Natural killer cell (primary cell): ENCODE measurements at regions of chr4 and their contacts with region 1.

Region 1: GRCh38 chr4:47668810-47669408 is 169.0 kb downstream of the CORIN start:
- DNase-seq: peak in 1 of 2 donors; percentile 70
- ATAC-seq: peak in 2 of 3 donors; percentile 60 to 68
- H3K4me3 ChIP-seq: no peak overlapping the region
- H3K4me3 Mint-ChIP-seq: no peak overlapping the region
- H3K27ac ChIP-seq: no peak overlapping the region
- H3K27ac Mint-ChIP-seq: no peak overlapping the region
- H3K4me1 ChIP-seq: no peaks in the 10 kb centered on the region
- H3K4me1 Mint-ChIP-seq: no peaks in the 10 kb centered on the region
- H3K27me3 ChIP-seq: no peaks in the 10 kb centered on the region
- H3K27me3 Mint-ChIP-seq: peaks cover 16 to 58% of the 10 kb centered on the region in 2 donors
- CTCF ChIP-seq: peak; percentile 68

Region 2: GRCh38 chr4:46219872-46220271 is 1449.0 kb before region 1 on chr4:
- intact Hi-C with region 1: no loop called
- DNase-seq: no peak
- ATAC-seq: no peak
- H3K4me3 ChIP-seq: no peak overlapping the region
- H3K4me3 Mint-ChIP-seq: no peak overlapping the region
- H3K27ac ChIP-seq: no peak overlapping the region
- H3K27ac Mint-ChIP-seq: no peak overlapping the region
- H3K4me1 ChIP-seq: no peaks in the 10 kb centered on the region
- H3K4me1 Mint-ChIP-seq: no peaks in the 10 kb centered on the region
- H3K27me3 ChIP-seq: no peaks in the 10 kb centered on the region
- H3K27me3 Mint-ChIP-seq: no peaks in the 10 kb centered on the region
- CTCF ChIP-seq: no peak

Region 3: DNA sequence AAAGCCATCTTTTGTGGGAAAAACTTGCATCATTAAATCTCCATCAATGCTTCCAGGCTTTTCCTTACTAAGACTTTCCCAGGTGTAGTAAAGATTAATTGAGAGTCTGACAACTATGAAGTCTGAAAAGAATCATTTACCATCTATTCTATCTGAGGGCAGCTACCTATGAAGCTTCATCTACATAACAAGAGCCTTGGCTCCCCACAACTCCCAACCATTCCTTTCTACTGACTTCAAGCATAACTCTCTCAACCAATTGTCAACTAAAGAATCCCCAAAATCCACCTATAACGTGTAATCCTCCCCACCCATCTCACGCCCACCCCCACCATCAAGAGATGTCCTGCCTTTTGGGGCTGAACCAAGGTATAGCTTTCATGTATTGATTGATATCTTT is 1177.5 kb before region 1 on chr4:
- intact Hi-C with region 1: no loop called
- DNase-seq: no peak
- ATAC-seq: no peak
- H3K4me3 ChIP-seq: no peak overlapping the region
- H3K4me3 Mint-ChIP-seq: no peak overlapping the region
- H3K27ac ChIP-seq: no peak overlapping the region
- H3K27ac Mint-ChIP-seq: no peak overlapping the region
- H3K4me1 ChIP-seq: no peaks in the 10 kb centered on the region
- H3K4me1 Mint-ChIP-seq: no peaks in the 10 kb centered on the region
- H3K27me3 ChIP-seq: no peaks in the 10 kb centered on the region
- H3K27me3 Mint-ChIP-seq: no peaks in the 10 kb centered on the region
- CTCF ChIP-seq: no peak

Region 4: GRCh38 chr4:46676364-46676763 is 992.5 kb before region 1 on chr4:
- intact Hi-C with region 1: no loop called
- DNase-seq: no peak
- ATAC-seq: no peak
- H3K4me3 ChIP-seq: no peak overlapping the region
- H3K4me3 Mint-ChIP-seq: no peak overlapping the region
- H3K27ac ChIP-seq: no peak overlapping the region
- H3K27ac Mint-ChIP-seq: no peak overlapping the region
- H3K4me1 ChIP-seq: no peaks in the 10 kb centered on the region
- H3K4me1 Mint-ChIP-seq: no peaks in the 10 kb centered on the region
- H3K27me3 ChIP-seq: no peaks in the 10 kb centered on the region
- H3K27me3 Mint-ChIP-seq: no peaks in the 10 kb centered on the region
- CTCF ChIP-seq: no peak

Region 5: GRCh38 chr4:47368211-47368610 is 300.7 kb before region 1 on chr4:
- intact Hi-C with region 1: no loop called
- DNase-seq: no peak
- ATAC-seq: no peak
- H3K4me3 ChIP-seq: no peak overlapping the region
- H3K4me3 Mint-ChIP-seq: no peak overlapping the region
- H3K27ac ChIP-seq: no peak overlapping the region
- H3K27ac Mint-ChIP-seq: no peak overlapping the region
- H3K4me1 ChIP-seq: no peaks in the 10 kb centered on the region
- H3K4me1 Mint-ChIP-seq: no peaks in the 10 kb centered on the region
- H3K27me3 ChIP-seq: no peaks in the 10 kb centered on the region
- H3K27me3 Mint-ChIP-seq: peaks cover 10 to 17% of the 10 kb centered on the region in 2 donors
- CTCF ChIP-seq: no peak

Region 6: GRCh38 chr4:47836641-47837093 is 167.8 kb after region 1 on chr4:
- intact Hi-C with region 1: loop called (anchors 2 kb)
- DNase-seq: peak; percentile 23 to 68
- ATAC-seq: peak; percentile 61 to 66 (median 65)
- H3K4me3 ChIP-seq: peak overlapping the region; percentile 50
- H3K4me3 Mint-ChIP-seq: peak overlapping the region; percentile 92
- H3K27ac ChIP-seq: no peak overlapping the region
- H3K27ac Mint-ChIP-seq: peak overlapping the region in 1 of 2 donors; percentile 71
- H3K4me1 ChIP-seq: peaks cover 28% of the 10 kb centered on the region
- H3K4me1 Mint-ChIP-seq: peaks cover 27 to 33% of the 10 kb centered on the region in 2 donors
- H3K27me3 ChIP-seq: peaks cover 7% of the 10 kb centered on the region
- H3K27me3 Mint-ChIP-seq: peaks cover 14 to 27% of the 10 kb centered on the region in 2 donors
- CTCF ChIP-seq: peak; percentile 5

Region 7: DNA sequence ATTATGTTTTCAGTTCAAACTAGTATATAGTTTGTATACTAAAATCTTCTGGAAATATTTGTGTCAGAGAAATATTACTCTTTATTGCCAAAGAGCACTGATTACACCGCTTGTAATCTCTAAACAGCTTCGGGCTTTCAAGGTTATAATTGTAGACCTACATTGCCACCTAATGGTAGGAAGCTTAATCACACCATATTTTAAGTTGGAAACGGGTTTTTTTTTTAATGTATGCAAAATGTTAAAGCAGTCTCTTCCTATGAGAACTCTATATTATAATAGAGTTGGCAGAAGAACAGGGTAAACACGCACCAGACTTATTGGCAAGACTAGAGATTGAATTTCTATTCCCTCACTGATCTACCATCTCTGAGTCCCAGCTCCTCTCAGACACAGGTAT is 264.9 kb after region 1 on chr4:
- intact Hi-C with region 1: loop called (anchors 1 kb)
- DNase-seq: peak in 1 of 2 donors; percentile 74
- ATAC-seq: peak; percentile 72 to 84 (median 75)
- H3K4me3 ChIP-seq: no peak overlapping the region
- H3K4me3 Mint-ChIP-seq: no peak overlapping the region
- H3K27ac ChIP-seq: no peak overlapping the region
- H3K27ac Mint-ChIP-seq: no peak overlapping the region
- H3K4me1 ChIP-seq: no peaks in the 10 kb centered on the region
- H3K4me1 Mint-ChIP-seq: no peaks in the 10 kb centered on the region
- H3K27me3 ChIP-seq: peaks cover 2% of the 10 kb centered on the region
- H3K27me3 Mint-ChIP-seq: peaks cover 15 to 29% of the 10 kb centered on the region in 2 donors
- CTCF ChIP-seq: peak; percentile 87